ENCODE measurements at regions of chr19 and their contacts with region 1.

Region 1: GRCh38 chr19:11293433-11294389 is 2.2 kb upstream of the TSPAN16 start:
- DNase-seq: peak; percentile 97 to 99
- H3K4me3 ChIP-seq: peak overlapping the region; percentile 21 to 23
- H3K27ac ChIP-seq: peak overlapping the region; percentile 50 to 64
- H3K4me1 ChIP-seq: peaks cover 0 to 25% (median 12%) of the 10 kb centered on the region in 4 donors
- H3K27me3 ChIP-seq: no peaks in the 10 kb centered on the region
- CTCF ChIP-seq: peak; percentile 99

Region 2: GRCh38 chr19:11096210-11096841 is 197.4 kb before region 1 on chr19:
- intact Hi-C with region 1: no loop called
- DNase-seq: peak; percentile 33 to 77
- H3K4me3 ChIP-seq: no peak overlapping the region
- H3K27ac ChIP-seq: peak overlapping the region; percentile 95 to 99
- H3K4me1 ChIP-seq: peaks cover 0 to 58% (median 33%) of the 10 kb centered on the region in 4 donors
- H3K27me3 ChIP-seq: no peaks in the 10 kb centered on the region
- CTCF ChIP-seq: no peak

Region 3: DNA sequence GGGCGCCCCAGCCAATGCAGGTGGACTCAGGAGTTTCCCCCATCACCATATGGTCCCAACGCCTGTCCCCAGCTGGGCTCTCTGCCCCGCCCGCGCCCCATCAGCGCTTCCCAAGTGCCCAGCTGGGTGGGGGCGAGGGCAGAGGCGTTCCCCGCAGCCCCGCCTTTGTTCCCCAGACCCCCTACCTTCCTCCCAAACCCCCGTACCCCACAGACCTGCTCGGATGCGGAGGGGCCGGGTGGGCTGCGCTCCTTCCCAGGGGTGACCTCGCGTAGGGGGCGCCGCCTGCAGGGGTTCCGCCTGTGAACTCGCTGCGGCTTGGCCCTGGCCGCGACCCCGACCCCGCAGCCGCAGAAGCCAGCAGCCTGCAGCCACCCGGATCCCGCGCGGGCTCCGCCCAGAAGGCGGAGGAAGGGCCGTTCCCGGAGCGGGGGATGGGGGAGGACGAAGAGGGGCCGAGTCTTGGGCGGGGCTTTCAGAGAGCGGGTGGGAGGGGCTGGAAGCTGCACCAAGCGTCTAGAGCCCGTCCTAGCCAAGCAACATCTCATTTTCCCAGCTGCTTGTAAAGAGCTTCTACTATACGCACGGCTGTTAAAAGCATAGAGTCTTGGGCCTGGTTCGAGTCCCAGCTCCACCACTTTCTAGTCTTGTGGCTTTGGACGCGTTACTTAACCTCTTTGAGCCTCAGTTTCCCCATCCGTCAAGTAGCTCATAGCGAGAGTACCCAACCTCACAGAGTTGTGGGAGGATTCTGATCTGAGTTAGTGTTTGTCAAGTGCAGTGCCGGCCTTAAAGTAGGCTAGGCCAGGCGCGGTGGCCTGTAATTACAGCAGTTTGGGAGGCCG is 45.8 kb after region 1 on chr19 and contains the start of gene RAB3D:
- intact Hi-C with region 1: loop called (anchors 5 kb)
- DNase-seq: peak; percentile 91 to 97
- H3K4me3 ChIP-seq: peak within 1 kb of the TSS; percentile 67 to 89
- H3K27ac ChIP-seq: peak within 1 kb of the TSS; percentile 80 to 81
- H3K4me1 ChIP-seq: peaks cover 0 to 40% (median 28%) of the 10 kb centered on the region in 4 donors
- H3K27me3 ChIP-seq: no peaks in the 10 kb centered on the region
- CTCF ChIP-seq: no peak

Region 4: GRCh38 chr19:11374433-11375142 is 80.9 kb after region 1 on chr19 and contains the start of gene SWSAP1:
- intact Hi-C with region 1: loop called (anchors 10 kb)
- DNase-seq: peak; percentile 99
- H3K4me3 ChIP-seq: peak within 1 kb of the TSS; percentile 62 to 63
- H3K27ac ChIP-seq: peak within 1 kb of the TSS; percentile 90 to 94
- H3K4me1 ChIP-seq: peaks cover 0 to 46% (median 38%) of the 10 kb centered on the region in 4 donors
- H3K27me3 ChIP-seq: no peaks in the 10 kb centered on the region
- CTCF ChIP-seq: peak in 1 of 2 experiments; percentile 20

Region 5: GRCh38 chr19:11446652-11447301 is 153.1 kb after region 1 on chr19:
- intact Hi-C with region 1: loop called (anchors 5 kb)
- DNase-seq: peak in 1 of 2 donors; percentile 32
- H3K4me3 ChIP-seq: no peak overlapping the region
- H3K27ac ChIP-seq: peak overlapping the region in 1 of 2 donors; percentile 19
- H3K4me1 ChIP-seq: peaks cover 0 to 4% (median 2%) of the 10 kb centered on the region in 4 donors
- H3K27me3 ChIP-seq: peaks cover 0 to 7% of the 10 kb centered on the region in 2 donors
- CTCF ChIP-seq: peak; percentile 68 to 83

Region 6: DNA sequence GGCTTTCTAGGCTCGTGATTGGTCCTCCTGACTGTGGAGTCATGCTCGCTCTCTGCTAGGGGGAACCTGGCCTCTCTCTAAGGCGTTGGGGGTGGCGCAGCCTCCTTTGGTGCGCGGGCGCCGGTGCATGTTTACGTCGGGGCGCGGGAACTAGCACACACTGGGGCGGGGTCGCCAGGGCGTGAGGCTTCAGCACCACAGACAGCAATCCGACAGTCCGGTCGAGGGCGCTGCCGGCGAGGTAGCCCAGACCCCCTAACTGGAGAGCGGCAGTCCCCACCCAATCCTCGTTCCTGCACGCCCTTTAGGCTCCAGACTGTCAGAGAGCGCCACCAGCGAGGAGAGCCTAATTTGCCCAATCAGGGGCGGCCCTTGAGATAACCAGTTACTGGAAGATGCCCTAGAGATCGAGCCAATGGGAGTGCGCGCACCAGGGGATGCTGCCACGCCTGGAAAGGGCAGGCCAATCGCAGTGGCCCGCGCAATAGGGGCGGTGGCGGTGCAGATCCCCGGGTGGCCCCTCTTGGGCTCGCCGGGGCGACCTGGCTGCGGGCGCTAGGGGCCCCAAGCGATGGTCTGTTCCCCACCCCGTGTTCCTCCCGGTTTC is 188.2 kb after region 1 on chr19:
- intact Hi-C with region 1: loop called (anchors 1 kb)
- DNase-seq: peak; percentile 69 to 83
- H3K4me3 ChIP-seq: peak overlapping the region; percentile 16 to 44
- H3K27ac ChIP-seq: peak overlapping the region in 1 of 2 donors; percentile 10
- H3K4me1 ChIP-seq: peaks cover 8 to 37% (median 36%) of the 10 kb centered on the region in 4 donors
- H3K27me3 ChIP-seq: peaks cover 22 to 77% of the 10 kb centered on the region in 2 donors
- CTCF ChIP-seq: no peak

Measured in tibial artery (tissue), 4 donors.